Activated naive CD4-positive, alpha-beta T cell treated with anti-CD3 and anti-CD28 coated beads for 36 hours (primary cell): ENCODE measurements at regions of chr10 and their contacts with region 1.

Region 1: GRCh38 chr10:100998991-100999741 is 442 bp upstream of the LZTS2 start:
- DNase-seq: peak; percentile 73
- H3K4me3 Mint-ChIP-seq: peak overlapping the region; percentile 84
- H3K27ac Mint-ChIP-seq: peak overlapping the region; percentile 82
- H3K4me1 Mint-ChIP-seq: peaks cover 18% of the 10 kb centered on the region
- H3K27me3 Mint-ChIP-seq: no peaks in the 10 kb centered on the region

Region 2: DNA sequence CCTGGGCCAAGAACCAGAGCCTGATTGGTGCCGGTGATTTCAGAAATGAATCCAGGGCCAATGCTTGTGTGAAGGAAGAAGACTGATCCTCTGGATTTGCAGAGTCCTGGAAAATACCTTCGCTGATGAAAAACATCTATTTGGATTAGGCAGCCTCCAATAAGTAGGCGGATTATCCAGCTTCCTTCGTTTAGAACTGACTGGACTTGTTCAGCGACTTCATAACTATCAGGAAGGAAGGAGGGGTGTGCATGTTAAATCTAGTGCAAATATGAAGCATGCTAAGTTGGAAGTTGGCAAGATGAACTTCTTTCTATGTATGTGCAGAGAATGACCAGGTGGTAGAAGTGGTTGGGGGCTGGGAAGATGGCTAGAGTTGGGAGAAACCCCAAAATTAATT is 1425.4 kb before region 1 on chr10:
- CTCF ChIA-PET with region 1: no interaction called
- intact Hi-C with region 1: no loop called
- DNase-seq: no peak
- H3K4me3 Mint-ChIP-seq: no peak overlapping the region
- H3K27ac Mint-ChIP-seq: no peak overlapping the region
- H3K4me1 Mint-ChIP-seq: no peaks in the 10 kb centered on the region
- H3K27me3 Mint-ChIP-seq: peaks cover 6% of the 10 kb centered on the region

Region 3: GRCh38 chr10:100373298-100374136 is 625.6 kb before region 1 on chr10:
- CTCF ChIA-PET with region 1: no interaction called
- intact Hi-C with region 1: loop called (anchors 5 kb)
- DNase-seq: peak; percentile 99
- H3K4me3 Mint-ChIP-seq: no peak overlapping the region
- H3K27ac Mint-ChIP-seq: no peak overlapping the region
- H3K4me1 Mint-ChIP-seq: peaks cover 30% of the 10 kb centered on the region
- H3K27me3 Mint-ChIP-seq: no peaks in the 10 kb centered on the region

Region 4: DNA sequence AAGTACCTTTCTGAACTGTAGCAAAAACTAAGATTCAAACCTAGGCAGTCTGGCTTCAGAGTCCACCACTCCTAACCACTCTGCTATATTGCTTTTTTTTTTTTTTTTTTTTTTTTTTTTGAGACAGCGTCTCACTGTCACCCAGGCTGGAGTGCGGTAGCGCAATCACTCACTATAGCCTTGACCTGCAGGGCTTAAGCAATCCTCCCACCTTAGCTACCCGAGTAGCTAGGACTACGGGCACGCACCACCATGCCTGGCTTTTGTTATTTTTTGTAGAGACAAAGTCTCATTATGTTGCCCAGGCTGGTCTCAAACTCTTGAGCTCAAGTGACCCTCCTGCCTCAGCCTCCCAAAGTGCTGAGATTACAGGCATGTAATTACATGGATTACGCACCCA is 96.5 kb before region 1 on chr10:
- CTCF ChIA-PET with region 1: no interaction called
- intact Hi-C with region 1: no loop called
- DNase-seq: no peak
- H3K4me3 Mint-ChIP-seq: no peak overlapping the region
- H3K27ac Mint-ChIP-seq: no peak overlapping the region
- H3K4me1 Mint-ChIP-seq: peaks cover 2% of the 10 kb centered on the region
- H3K27me3 Mint-ChIP-seq: no peaks in the 10 kb centered on the region

Region 5: DNA sequence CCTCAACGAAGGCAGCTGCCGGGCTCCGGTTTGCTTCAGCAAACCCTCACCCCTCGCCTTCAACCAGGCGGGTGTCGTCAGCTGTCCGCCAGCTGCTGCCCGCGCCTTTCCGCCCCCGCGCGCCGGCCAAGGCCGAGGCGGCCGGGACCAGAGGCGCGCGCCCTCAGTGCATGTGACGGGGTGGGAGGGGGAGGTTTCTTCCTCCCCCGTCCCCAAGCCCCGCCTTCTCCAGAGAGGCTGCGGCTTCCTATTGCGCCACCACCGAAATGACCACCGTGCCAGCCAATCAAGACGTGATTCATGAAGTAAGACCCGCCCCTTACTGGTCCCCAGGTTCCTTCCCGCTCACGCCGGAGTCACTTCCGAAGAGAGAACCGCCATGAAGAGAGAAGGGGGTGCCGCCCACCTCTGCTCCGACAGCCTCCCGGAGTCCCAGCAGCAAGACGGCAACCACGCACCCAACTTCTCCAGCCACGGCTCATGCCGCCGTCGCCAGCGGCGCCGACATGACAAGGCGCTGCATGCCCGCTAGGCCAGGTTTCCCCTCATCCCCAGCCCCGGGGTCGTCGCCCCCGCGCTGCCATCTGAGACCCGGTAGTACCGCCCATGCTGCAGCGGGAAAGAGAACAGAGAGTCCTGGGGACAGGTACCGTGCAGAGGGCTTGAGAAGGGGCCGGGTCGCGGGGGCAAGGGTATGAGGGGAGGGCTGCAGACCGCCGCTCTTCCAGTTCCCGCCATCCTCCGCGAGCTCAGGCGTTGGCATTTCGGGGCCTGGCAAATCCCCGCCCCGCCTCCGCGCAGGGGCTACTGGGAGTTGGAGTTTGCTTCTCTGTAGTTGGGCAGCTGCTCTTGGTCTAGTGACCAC is 86.3 kb before region 1 on chr10 and contains the start of gene SLF2:
- CTCF ChIA-PET with region 1: interaction called, 11 read pairs
- intact Hi-C with region 1: loop called (anchors 1 kb)
- DNase-seq: peak; percentile 98
- H3K4me3 Mint-ChIP-seq: peak within 1 kb of the TSS; percentile 98
- H3K27ac Mint-ChIP-seq: peak within 1 kb of the TSS; percentile 99
- H3K4me1 Mint-ChIP-seq: peaks cover 42% of the 10 kb centered on the region
- H3K27me3 Mint-ChIP-seq: no peaks in the 10 kb centered on the region
- total RNA-seq, gene SLF2: 29.3 to 30.3 TPM

Region 6: GRCh38 chr10:100986952-100987750 is 12.0 kb before region 1 on chr10 and contains the starts of genes MRPL43 and TWNK:
- CTCF ChIA-PET with region 1: interaction called, 33 read pairs
- intact Hi-C with region 1: loop called (anchors 1 kb)
- DNase-seq: peak; percentile 91
- H3K4me3 Mint-ChIP-seq: peak within 1 kb of the TSS; percentile 91
- H3K27ac Mint-ChIP-seq: peak within 1 kb of the TSS; percentile 72
- H3K4me1 Mint-ChIP-seq: peaks cover 51% of the 10 kb centered on the region
- H3K27me3 Mint-ChIP-seq: no peaks in the 10 kb centered on the region
- total RNA-seq, gene MRPL43: 45.0 to 47.3 TPM
- total RNA-seq, gene TWNK: 10.4 to 11.4 TPM

Region 7: DNA sequence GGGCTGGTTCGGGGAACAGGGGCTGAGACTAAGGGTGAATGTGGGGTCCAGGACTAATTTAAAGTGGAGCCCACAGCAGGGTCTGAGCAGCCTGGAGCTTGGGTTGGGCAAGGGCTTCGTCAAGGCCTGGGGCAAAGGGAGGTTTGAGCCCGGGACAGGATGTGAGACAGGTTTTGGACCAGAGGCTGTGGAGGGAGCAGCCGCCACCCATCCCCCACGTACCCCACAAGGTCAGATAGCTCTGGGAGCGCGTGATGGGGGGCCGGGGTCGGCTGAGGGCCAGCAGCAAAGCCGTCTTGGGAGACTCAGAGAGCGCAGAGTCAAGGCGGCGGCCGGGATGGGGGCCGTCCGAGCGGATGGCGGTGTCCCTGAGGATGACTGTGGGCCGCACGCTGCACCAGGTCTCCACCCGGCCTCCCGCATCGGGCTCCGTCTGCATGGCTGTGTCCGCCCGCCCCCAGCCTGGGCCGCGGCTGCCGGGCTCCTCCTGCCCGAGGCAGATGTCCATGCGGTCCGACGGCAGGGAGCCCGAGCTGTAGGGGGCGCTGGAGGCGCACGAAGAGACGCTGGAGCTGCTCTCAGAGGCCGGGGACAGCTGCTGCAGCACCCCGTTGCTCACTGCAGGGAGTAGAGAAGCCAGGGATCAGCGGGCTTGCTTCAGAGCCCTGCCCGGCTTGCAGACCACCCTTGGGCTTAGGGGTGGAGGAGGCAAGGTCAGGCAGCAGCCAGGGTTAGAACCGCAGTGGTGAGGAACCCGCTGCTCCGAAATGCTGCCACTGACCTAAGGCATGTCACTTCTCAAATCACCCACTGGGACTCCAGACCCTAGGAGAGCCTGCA is 19.7 kb after region 1 on chr10:
- CTCF ChIA-PET with region 1: interaction called, 94 read pairs
- intact Hi-C with region 1: loop called (anchors 1 kb)
- DNase-seq: peak; percentile 87
- H3K4me3 Mint-ChIP-seq: no peak overlapping the region
- H3K27ac Mint-ChIP-seq: no peak overlapping the region
- H3K4me1 Mint-ChIP-seq: peaks cover 8% of the 10 kb centered on the region
- H3K27me3 Mint-ChIP-seq: peaks cover 41% of the 10 kb centered on the region

Region 8: DNA sequence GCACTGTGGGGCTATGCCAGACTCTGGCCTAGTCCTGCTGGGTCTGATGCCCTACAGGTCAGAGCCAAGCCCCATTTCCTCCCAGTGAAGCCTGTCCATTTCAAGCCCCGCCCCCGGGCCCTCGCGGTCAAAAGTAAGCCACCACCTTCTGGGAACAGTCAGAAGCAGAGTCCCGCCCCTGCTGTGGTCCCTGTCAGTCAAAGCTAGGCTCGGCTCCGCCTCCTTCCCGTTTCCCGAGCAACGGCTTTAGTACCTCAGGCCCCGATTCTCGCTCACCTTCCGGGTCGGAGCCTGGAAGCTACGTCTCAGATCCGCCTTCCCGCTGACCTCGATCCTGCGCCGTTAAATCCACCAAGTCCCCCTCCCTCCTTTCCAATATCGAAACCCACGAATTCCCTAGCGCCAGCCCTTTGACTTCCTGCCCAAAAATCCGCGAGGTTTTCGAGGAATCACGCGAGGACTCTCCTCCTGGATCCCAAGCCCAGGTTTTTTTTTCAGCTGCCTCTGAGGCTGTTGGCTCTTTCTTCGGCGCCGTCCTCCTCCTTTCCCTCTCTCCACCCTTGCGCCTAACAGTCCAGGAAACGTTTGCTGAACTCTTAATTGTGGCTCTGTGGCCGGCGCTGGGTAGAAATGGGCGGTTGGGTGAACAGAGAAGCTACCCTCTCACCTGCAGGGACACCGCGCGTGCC is 43.6 kb after region 1 on chr10:
- CTCF ChIA-PET with region 1: interaction called, 21 read pairs
- intact Hi-C with region 1: no loop called
- DNase-seq: peak; percentile 97
- H3K4me3 Mint-ChIP-seq: peak overlapping the region; percentile 91
- H3K27ac Mint-ChIP-seq: peak overlapping the region; percentile 74
- H3K4me1 Mint-ChIP-seq: peaks cover 22% of the 10 kb centered on the region
- H3K27me3 Mint-ChIP-seq: peaks cover 17% of the 10 kb centered on the region

Region 9: GRCh38 chr10:101118626-101119025 is 119.5 kb after region 1 on chr10:
- CTCF ChIA-PET with region 1: no interaction called
- intact Hi-C with region 1: no loop called
- DNase-seq: no peak
- H3K4me3 Mint-ChIP-seq: no peak overlapping the region
- H3K27ac Mint-ChIP-seq: no peak overlapping the region
- H3K4me1 Mint-ChIP-seq: peaks cover 22% of the 10 kb centered on the region
- H3K27me3 Mint-ChIP-seq: peaks cover 33% of the 10 kb centered on the region

Region 10: GRCh38 chr10:101428036-101428435 is 428.9 kb after region 1 on chr10:
- CTCF ChIA-PET with region 1: no interaction called
- intact Hi-C with region 1: no loop called
- DNase-seq: no peak
- H3K4me3 Mint-ChIP-seq: no peak overlapping the region
- H3K27ac Mint-ChIP-seq: no peak overlapping the region
- H3K4me1 Mint-ChIP-seq: no peaks in the 10 kb centered on the region
- H3K27me3 Mint-ChIP-seq: no peaks in the 10 kb centered on the region